Sigmoid colon (tissue), 7 donors: ENCODE measurements at regions of chr11 and their contacts with region 1.

Region 1: DNA sequence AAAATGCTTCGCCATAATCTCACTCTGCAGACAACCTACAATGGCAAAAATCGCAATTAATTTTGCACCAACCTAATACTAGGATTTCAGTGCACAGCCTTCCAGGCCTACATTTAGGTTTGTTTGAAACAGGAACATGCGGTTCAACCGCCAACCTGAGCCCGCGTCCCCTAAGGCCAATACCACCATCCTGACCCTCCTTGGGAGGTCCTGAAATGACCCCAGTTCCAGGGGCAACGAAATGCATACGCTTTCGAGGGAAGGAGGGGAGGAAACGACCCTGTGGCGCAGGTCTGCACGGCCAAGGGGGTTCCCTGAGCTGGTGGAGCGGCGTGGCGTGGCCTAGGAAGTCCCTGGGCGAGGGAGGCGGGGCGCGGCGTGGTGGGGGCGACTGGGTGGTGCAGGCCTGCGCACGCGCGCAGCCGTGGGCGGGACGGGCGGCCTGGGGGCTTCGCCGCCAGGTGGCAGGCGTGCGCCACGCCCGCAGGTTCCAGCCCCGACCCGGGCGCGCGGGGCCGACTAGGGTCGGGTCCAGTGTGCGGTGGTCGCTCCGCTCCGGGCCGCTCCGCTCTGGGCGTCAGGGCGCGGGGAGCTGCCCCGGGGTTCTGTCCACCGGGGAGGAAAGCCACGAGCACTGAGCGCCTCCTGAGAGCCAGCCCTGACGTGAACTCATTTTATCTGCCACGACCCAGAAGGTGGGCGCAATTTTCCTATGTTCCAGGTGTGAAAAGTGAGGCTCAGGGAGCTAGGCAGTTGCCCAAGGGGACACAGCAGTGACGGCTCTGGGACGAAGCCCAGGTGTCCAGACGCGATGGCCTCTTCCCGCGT is 94.1 kb downstream of the SWAP70 start:
- DNase-seq: peak; percentile 94
- H3K4me3 ChIP-seq: peak overlapping the region; percentile 55 to 83 (median 64)
- H3K27ac ChIP-seq: peak overlapping the region; percentile 89 to 96 (median 92)
- H3K4me1 ChIP-seq: peaks cover 0 to 37% (median 29%) of the 10 kb centered on the region in 4 donors
- H3K27me3 ChIP-seq: no peaks in the 10 kb centered on the region
- CTCF ChIP-seq: peak in 3 of 4 experiments; percentile 19 to 97 (median 37)
- EP300 ChIP-seq: no peak
- POLR2A ChIP-seq: no peak

Region 2: DNA sequence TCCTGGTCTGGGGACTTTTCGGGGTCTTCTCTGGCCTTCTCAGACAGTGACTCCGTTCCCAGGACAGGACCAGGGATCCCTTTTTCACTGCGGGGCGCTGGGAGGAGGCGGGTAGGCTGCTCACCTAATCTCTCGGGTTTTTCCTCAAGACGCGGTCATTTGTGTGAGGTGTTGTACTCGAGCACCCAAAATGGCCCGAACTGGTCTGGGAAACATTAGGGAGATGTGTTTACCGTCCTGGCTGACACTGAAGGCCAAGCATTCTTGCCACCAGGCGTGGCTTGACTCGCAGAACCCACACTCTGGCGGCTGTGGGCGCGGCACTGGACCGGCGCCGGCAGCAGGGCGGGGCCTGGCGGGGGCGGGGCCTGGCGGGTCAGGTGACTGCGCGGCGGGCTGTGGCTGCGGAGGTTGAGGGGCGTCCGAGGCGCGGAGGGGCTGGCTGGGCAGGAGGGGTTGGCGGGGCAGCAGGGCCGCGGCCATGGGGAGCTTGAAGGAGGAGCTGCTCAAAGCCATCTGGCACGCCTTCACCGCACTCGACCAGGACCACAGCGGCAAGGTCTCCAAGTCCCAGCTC is 94.2 kb before region 1 on chr11 and contains the start of gene SWAP70:
- intact Hi-C with region 1: loop called (anchors 5 kb)
- DNase-seq: peak; percentile 95
- H3K4me3 ChIP-seq: peak within 1 kb of the TSS; percentile 69 to 99 (median 84)
- H3K27ac ChIP-seq: peak within 1 kb of the TSS; percentile 86 to 99 (median 93)
- H3K4me1 ChIP-seq: peaks cover 0 to 16% (median 5%) of the 10 kb centered on the region in 4 donors
- H3K27me3 ChIP-seq: no peaks in the 10 kb centered on the region
- CTCF ChIP-seq: peak; percentile 59 to 84 (median 72)
- EP300 ChIP-seq: no peak
- POLR2A ChIP-seq: peak; percentile 21 to 37
- total RNA-seq, gene SWAP70: 22.1 to 30.3 (median 28.6) TPM

Region 3: GRCh38 chr11:9784602-9785315 is 26.7 kb after region 1 on chr11:
- intact Hi-C with region 1: no loop called
- DNase-seq: no peak
- H3K4me3 ChIP-seq: no peak overlapping the region
- H3K27ac ChIP-seq: peak overlapping the region in 3 of 4 donors; percentile 11 to 30 (median 29)
- H3K4me1 ChIP-seq: peaks cover 0 to 17% (median 0%) of the 10 kb centered on the region in 4 donors
- H3K27me3 ChIP-seq: no peaks in the 10 kb centered on the region
- CTCF ChIP-seq: no peak
- EP300 ChIP-seq: no peak
- POLR2A ChIP-seq: no peak

Region 4: GRCh38 chr11:9802291-9802861 is 44.4 kb after region 1 on chr11:
- intact Hi-C with region 1: loop called (anchors 5 kb)
- DNase-seq: no peak
- H3K4me3 ChIP-seq: no peak overlapping the region
- H3K27ac ChIP-seq: peak overlapping the region; percentile 63 to 88 (median 78)
- H3K4me1 ChIP-seq: peaks cover 0 to 46% (median 44%) of the 10 kb centered on the region in 4 donors
- H3K27me3 ChIP-seq: no peaks in the 10 kb centered on the region
- CTCF ChIP-seq: no peak
- EP300 ChIP-seq: peak; percentile 40 to 88 (median 82)
- POLR2A ChIP-seq: no peak

Region 5: DNA sequence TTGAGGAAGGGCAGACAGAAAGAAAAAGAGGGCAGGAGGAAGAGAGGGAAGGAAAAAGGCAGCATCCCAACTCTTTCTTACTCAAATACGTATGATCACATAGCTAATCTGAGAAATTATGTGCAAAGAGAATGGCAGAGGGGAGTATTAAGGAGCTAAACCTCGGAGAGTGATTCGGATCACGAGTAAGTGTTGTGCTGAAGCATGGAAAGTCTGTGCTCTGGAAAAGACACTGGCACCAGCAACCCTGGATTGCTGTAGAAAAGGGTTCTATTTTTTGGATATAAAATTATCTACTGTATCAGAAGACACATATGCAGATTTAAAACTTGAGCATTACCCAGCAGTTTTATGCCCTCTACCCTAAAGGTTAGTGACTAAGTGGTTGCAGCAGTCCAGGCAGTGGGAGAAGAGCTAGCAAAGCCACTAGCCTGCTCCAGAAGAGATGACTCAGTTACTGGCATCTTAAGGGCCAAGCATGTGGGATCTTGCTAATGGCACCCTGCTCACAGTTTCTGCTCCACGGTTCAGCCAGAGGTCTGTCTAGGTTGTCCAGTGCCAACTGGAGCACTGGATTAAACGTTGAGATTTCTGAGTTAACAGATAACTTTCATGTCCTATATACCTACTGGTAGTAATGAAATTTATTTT is 57.6 kb after region 1 on chr11:
- intact Hi-C with region 1: no loop called
- DNase-seq: no peak
- H3K4me3 ChIP-seq: no peak overlapping the region
- H3K27ac ChIP-seq: peak overlapping the region in 1 of 4 donors; percentile 3
- H3K4me1 ChIP-seq: peaks cover 0 to 7% (median 0%) of the 10 kb centered on the region in 4 donors
- H3K27me3 ChIP-seq: no peaks in the 10 kb centered on the region
- CTCF ChIP-seq: no peak
- EP300 ChIP-seq: no peak
- POLR2A ChIP-seq: no peak

Region 6: GRCh38 chr11:9972989-9973388 is 215.0 kb after region 1 on chr11:
- intact Hi-C with region 1: loop called (anchors 1 kb)
- DNase-seq: no peak
- H3K4me3 ChIP-seq: no peak overlapping the region
- H3K27ac ChIP-seq: no peak overlapping the region
- H3K4me1 ChIP-seq: peaks cover 0 to 5% (median 2%) of the 10 kb centered on the region in 4 donors
- H3K27me3 ChIP-seq: no peaks in the 10 kb centered on the region
- CTCF ChIP-seq: peak; percentile 37 to 63 (median 60)
- EP300 ChIP-seq: no peak
- POLR2A ChIP-seq: no peak

Region 7: GRCh38 chr11:10208131-10208575 is 450.1 kb after region 1 on chr11:
- intact Hi-C with region 1: loop called (anchors 10 kb)
- DNase-seq: no peak
- H3K4me3 ChIP-seq: no peak overlapping the region
- H3K27ac ChIP-seq: peak overlapping the region in 1 of 4 donors; percentile 30
- H3K4me1 ChIP-seq: peaks cover 0 to 7% (median 2%) of the 10 kb centered on the region in 4 donors
- H3K27me3 ChIP-seq: no peaks in the 10 kb centered on the region
- CTCF ChIP-seq: peak; percentile 50 to 76 (median 72)
- EP300 ChIP-seq: no peak
- POLR2A ChIP-seq: no peak

Region 8: DNA sequence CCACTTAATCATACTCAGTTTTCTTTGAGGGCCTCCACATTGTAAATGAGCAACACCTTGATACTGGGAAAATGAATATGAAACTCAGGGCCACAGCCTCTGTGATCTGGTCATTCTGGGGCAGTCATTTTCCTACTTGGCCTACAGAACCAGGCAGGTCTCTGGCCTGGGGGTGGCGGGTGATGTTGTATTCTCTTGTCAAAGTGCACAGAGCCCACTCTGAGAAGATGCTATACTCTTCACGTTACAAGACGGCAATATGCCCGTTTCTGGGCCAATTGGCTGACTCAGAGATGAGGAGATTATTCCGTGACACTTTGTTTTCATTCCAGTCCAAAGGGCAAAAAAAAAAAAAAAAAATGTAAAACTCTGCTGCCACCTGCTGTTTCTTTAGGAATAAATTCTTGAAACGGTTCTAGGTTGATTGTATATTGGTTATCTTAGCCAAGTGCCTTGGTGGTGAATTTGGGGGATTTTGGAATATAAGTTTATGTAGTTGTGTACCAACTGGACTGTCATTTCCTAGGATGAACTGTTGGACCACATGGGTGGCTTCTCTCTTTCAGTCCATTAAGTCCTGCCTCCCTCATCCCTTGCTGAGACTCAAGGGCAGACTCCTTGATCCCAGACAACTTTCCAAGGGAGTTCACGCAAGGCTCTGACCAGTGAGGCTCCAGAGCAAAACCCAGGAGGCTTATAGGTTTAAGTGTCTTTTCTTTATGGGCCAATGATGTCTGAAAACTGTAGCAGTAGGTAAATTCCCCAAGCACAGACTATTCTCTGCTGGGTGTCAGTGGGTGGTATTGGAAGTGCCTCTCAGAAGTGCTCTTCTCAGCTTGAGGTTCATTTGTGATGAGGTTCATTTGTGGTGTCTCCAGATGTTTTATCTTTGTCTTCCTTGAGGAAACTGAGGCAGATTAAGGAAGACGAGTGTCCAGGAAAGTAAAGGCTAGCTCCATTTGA is 565.1 kb after region 1 on chr11:
- intact Hi-C with region 1: loop called (anchors 5 kb)
- DNase-seq: peak; percentile 85
- H3K4me3 ChIP-seq: no peak overlapping the region
- H3K27ac ChIP-seq: peak overlapping the region; percentile 75 to 81 (median 80)
- H3K4me1 ChIP-seq: peaks cover 0 to 88% (median 77%) of the 10 kb centered on the region in 4 donors
- H3K27me3 ChIP-seq: no peaks in the 10 kb centered on the region
- CTCF ChIP-seq: peak; percentile 45 to 79 (median 54)
- EP300 ChIP-seq: peak in 1 of 4 donors; percentile 5
- POLR2A ChIP-seq: no peak